ENCODE measurements at regions of chr12 and their contacts with region 1.

Region 1: DNA sequence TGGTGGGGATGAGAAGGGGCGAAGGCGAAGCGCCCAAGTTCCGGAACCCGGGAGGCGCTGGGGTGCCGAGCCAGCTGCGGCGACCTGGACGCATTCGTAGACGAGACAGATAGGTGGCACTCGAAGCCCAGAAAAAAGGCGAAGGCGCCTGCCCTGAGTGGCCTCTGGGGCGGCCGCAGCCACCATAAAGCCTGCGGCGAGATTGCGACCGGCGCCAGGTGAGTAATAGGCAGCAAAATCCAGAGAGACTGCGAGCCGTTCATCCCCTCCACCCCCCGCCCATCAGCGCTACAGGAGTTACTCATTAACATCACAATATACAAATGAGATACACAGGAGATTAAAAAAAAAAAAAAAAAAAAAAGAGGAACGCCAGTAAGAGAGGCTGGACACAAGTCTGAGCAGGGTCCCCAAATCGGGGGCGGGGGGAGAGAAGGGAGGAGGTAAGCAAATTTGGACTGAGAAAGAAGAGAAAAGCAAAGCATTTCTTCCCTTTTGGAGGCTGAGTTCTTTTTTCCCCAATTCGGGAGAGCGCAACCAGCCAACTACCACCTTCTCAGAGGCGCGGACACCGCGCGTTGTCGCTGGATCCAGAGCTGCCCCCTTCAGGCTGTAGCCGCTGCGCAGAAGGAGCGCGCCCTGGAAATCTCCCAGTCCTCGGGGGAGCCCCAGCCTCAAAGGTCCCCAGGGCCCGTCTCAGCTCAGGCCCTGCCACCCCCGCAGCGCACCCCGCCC is 15.7 kb downstream of the TBX3 start:
- DNase-seq: no peak
- H3K4me3 ChIP-seq: peak overlapping the region; percentile 59
- H3K27ac ChIP-seq: peak overlapping the region; percentile 95
- H3K27me3 ChIP-seq: no peaks in the 10 kb centered on the region
- CTCF ChIP-seq: peak; percentile 55

Region 2: GRCh38 chr12:114355389-114356088 is 312.8 kb before region 1 on chr12:
- CTCF ChIA-PET with region 1: no interaction called
- POLR2A ChIA-PET with region 1: no interaction called
- DNase-seq: no peak
- H3K4me3 ChIP-seq: no peak overlapping the region
- H3K27ac ChIP-seq: no peak overlapping the region
- H3K27me3 ChIP-seq: no peaks in the 10 kb centered on the region
- CTCF ChIP-seq: peak; percentile 28

Region 3: DNA sequence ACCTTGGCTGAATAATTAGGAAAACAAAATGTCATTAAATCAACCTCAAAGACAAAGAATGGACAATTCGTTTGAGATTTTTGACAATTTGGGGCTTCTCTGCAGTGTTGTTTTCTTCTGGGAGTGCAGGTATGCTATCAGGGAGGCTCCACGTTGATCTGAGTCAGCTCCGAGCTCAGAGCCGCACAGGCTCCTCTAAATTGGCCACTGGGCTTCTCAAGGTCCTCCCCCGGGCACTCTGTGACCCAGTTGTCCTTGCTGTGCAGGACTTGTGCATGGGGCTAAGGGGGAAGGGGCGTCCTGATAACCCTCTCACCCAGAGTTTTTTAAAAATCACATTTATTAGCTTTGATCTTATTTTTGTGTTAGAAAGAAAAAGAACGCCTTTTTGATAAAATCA is 37.1 kb before region 1 on chr12:
- CTCF ChIA-PET with region 1: no interaction called
- POLR2A ChIA-PET with region 1: no interaction called
- DNase-seq: no peak
- H3K4me3 ChIP-seq: no peak overlapping the region
- H3K27ac ChIP-seq: no peak overlapping the region
- H3K27me3 ChIP-seq: peaks cover 2% of the 10 kb centered on the region
- CTCF ChIP-seq: no peak

Region 4: DNA sequence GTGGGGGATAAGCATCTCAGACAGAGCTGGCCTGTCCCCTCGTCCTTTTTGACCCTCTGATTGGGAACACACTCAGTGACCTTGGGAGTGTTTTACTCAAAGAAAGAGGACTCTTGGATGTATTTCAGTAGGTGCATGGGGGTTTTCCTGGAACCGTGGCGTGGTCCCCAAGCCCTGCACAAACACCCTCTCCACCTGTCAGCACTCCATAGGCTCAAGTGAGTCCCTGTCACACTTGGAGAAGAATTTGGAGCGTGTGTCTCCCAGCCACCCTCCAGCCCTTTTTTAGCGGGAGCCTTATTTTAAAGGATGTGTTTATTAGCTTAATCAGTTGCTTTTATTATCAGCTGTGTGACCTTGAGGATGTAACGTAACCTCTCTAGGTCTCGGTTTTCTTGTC is 52.9 kb after region 1 on chr12:
- CTCF ChIA-PET with region 1: no interaction called
- POLR2A ChIA-PET with region 1: no interaction called
- DNase-seq: no peak
- H3K4me3 ChIP-seq: no peak overlapping the region
- H3K27ac ChIP-seq: no peak overlapping the region
- H3K27me3 ChIP-seq: no peaks in the 10 kb centered on the region
- CTCF ChIP-seq: no peak

Region 5: DNA sequence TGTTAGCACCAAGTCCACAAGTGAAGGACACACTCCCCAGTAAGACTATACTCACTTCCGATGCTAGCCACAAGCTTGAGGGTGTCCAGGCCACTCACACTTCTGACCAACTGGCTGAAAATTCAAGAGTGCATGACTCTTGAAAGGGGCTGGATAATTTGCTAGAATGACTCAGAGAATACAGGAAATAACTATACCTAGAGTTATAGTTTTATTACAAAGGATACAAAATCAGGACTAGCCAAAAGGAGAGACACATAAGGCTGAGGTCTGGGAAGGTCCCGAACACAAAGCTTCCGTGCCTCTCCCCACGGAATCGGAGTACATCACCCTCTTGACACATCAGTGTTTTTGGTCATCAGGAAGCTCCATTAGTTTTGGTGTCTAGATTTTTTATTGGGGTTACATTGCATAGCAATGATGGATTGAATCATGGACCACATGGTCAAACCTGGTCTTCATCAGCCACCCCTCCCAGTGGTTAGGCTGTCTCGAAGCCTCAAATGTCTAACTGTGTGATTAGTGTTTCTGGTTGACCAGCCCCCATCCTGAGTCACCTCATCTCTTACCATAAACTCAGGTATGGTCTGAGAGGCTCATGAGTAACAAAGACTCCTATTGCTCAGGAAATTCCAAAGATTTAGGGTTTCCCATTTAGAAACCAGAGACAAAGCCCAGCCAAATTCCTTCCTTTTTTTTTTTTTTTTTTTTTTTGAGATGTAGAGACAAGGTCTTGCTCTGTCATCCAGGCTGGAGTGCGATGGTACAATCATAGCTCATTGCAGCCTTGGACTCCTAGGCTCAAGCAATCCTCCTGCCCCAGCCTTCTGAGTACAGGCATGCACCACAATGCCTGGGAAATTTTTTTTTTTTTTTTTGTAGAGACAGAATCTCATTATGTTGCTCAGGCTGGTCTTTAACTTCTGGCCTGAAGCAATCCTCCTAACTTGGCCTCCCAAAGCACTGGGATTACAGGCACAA is 487.6 kb after region 1 on chr12:
- CTCF ChIA-PET with region 1: no interaction called
- POLR2A ChIA-PET with region 1: interaction called, 13 read pairs
- DNase-seq: peak; percentile 59
- H3K4me3 ChIP-seq: no peak overlapping the region
- H3K27ac ChIP-seq: peak overlapping the region; percentile 71
- H3K27me3 ChIP-seq: no peaks in the 10 kb centered on the region
- CTCF ChIP-seq: no peak

Region 6: DNA sequence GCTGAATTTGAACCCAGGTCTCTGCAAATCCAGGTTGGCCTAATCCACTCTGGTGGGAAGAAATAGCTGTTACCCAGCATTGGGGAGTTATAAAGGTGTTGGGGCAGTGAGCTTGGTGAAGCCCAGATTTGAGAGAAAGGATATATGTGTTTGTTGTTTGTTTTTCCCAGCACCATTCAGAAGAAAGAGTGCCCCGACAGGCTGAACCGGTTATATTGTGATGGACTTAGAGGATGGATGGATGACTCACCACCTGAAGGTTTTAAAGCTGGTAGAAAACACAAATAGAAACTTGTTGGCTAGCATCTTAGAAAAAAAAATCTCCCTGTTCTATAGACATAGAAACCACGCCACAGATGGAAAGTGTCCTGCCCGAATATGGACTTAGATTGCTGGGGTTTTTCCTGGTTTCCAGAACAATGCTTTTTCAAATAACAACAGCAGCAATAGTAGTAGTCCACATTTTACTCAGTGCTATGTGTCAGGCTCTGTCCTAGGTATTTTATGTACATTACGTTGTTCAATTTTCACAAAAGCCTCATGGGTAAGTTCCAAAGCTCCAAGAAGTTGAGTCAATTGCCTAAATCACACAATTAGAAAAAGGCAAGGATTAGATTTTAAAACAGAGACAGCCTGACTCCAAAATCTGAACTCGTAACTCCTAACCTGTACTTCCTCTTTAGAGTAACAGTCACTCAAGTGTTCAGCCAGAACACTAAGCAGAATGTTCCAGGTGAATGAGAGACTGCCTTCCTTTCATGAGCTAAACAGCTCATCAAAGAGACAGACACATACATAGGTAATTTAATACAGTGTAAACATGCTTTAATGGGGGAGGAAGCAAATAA is 1204.8 kb after region 1 on chr12:
- CTCF ChIA-PET with region 1: no interaction called
- POLR2A ChIA-PET with region 1: interaction called, 10 read pairs
- DNase-seq: no peak
- H3K4me3 ChIP-seq: no peak overlapping the region
- H3K27ac ChIP-seq: no peak overlapping the region
- H3K27me3 ChIP-seq: peaks cover 3% of the 10 kb centered on the region
- CTCF ChIP-seq: no peak

Region 7: GRCh38 chr12:115916910-115917668 is 1248.8 kb after region 1 on chr12:
- CTCF ChIA-PET with region 1: interaction called, 11 read pairs
- POLR2A ChIA-PET with region 1: no interaction called
- DNase-seq: no peak
- H3K4me3 ChIP-seq: no peak overlapping the region; the same call in 1 of the 2 replicates
- H3K27ac ChIP-seq: no peak overlapping the region
- H3K27me3 ChIP-seq: peaks cover 5% of the 10 kb centered on the region
- CTCF ChIP-seq: peak; percentile 83